Caco-2 (cell line): ENCODE measurements at regions of chr14 and their contacts with region 1.

Region 1: GRCh38 chr14:36070031-36070719 is 106.3 kb downstream of the PTCSC3 start:
- DNase-seq: peak; percentile 77 to 78
- H3K4me3 ChIP-seq: no peak overlapping the region
- H3K4me3 Mint-ChIP-seq: no peak overlapping the region
- H3K27ac Mint-ChIP-seq: no peak overlapping the region
- H3K4me1 ChIP-seq: no peaks in the 10 kb centered on the region
- H3K4me1 Mint-ChIP-seq: no peaks in the 10 kb centered on the region
- H3K27me3 ChIP-seq: peaks cover 2% of the 10 kb centered on the region; the same call in 1 of the 2 replicates
- H3K27me3 Mint-ChIP-seq: peaks cover 4% of the 10 kb centered on the region
- CTCF ChIP-seq: peak; percentile 77 to 90

Region 2: DNA sequence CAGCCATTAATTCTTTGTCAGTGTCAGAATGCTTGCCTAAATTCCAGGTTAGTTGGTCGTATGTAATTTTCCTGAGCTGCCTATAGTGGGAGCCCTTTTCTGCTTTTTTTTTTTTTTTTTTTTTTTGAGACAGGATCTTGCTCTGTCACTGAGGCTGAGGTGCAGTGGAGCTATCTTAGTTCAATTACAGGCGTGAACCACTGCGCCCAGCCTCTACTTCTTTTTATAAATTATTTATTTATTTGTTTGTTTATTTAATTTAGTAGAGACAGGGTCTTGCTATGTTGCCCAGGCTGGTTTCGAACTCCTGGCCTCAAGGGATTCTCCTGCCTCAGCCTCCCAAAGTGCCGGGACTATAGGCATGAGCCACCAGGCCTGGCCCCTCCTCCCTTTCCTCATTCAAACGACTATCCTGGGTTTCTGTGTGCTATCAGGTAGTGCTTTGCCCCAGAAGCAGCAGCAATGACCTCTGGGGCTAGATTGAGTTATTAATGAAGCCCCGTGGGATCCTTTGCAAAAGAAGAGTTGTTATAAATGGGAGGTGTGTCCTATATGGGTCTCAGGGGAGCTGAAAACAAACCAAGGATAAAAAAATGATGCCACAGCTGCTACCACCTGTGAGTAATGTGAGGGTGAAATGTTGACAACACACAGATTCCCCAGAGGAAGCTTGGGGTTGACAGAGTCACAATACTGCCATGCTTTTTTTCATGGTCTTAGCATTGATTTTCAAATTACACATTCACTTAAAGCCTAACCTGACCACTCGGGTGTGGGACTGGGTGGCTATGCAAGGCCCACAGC is 631.1 kb before region 1 on chr14:
- CTCF ChIA-PET with region 1: no interaction called
- POLR2A ChIA-PET with region 1: no interaction called
- intact Hi-C with region 1: no loop called
- DNase-seq: no peak
- H3K4me3 ChIP-seq: no peak overlapping the region
- H3K4me3 Mint-ChIP-seq: no peak overlapping the region
- H3K27ac Mint-ChIP-seq: no peak overlapping the region
- H3K4me1 ChIP-seq: peaks cover 13% of the 10 kb centered on the region
- H3K4me1 Mint-ChIP-seq: no peaks in the 10 kb centered on the region
- H3K27me3 ChIP-seq: no peaks in the 10 kb centered on the region
- H3K27me3 Mint-ChIP-seq: no peaks in the 10 kb centered on the region
- CTCF ChIP-seq: peak; percentile 54 to 66

Region 3: DNA sequence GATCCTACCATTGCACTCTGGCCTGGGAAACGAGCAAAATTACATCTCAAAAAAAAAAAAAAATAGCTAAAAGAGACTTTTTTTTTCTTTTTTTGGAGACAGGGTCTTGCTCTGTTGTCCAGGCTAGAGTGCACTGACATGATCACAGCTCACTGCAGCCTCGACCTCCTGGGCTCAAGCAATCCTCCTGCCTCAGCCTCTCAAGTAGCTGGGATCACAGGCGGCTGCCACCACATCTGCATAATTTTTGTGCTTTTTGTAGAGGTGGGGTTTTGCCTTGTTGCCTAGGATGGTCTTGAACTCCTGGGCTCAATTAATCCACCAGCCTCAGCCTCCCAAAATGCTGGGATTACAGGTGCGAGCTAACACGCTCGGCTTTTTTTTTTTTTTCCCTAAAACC is 272.4 kb before region 1 on chr14:
- CTCF ChIA-PET with region 1: no interaction called
- POLR2A ChIA-PET with region 1: no interaction called
- intact Hi-C with region 1: no loop called
- DNase-seq: no peak
- H3K4me3 ChIP-seq: no peak overlapping the region
- H3K4me3 Mint-ChIP-seq: no peak overlapping the region
- H3K27ac Mint-ChIP-seq: no peak overlapping the region
- H3K4me1 ChIP-seq: no peaks in the 10 kb centered on the region
- H3K4me1 Mint-ChIP-seq: no peaks in the 10 kb centered on the region
- H3K27me3 ChIP-seq: no peaks in the 10 kb centered on the region
- H3K27me3 Mint-ChIP-seq: no peaks in the 10 kb centered on the region
- CTCF ChIP-seq: no peak

Region 4: GRCh38 chr14:35883677-35884293 is 186.4 kb before region 1 on chr14:
- CTCF ChIA-PET with region 1: interaction called, 17 read pairs
- POLR2A ChIA-PET with region 1: no interaction called
- intact Hi-C with region 1: loop called (anchors 1 kb)
- DNase-seq: peak in 1 of 2 experiments; percentile 36
- H3K4me3 ChIP-seq: no peak overlapping the region
- H3K4me3 Mint-ChIP-seq: no peak overlapping the region
- H3K27ac Mint-ChIP-seq: no peak overlapping the region
- H3K4me1 ChIP-seq: no peaks in the 10 kb centered on the region
- H3K4me1 Mint-ChIP-seq: no peaks in the 10 kb centered on the region
- H3K27me3 ChIP-seq: no peaks in the 10 kb centered on the region
- H3K27me3 Mint-ChIP-seq: peaks cover 3% of the 10 kb centered on the region
- CTCF ChIP-seq: peak; percentile 68 to 70

Region 5: GRCh38 chr14:36105401-36105800 is 35.2 kb after region 1 on chr14:
- CTCF ChIA-PET with region 1: interaction called, 9 read pairs
- POLR2A ChIA-PET with region 1: no interaction called
- intact Hi-C with region 1: loop called (anchors 2 kb)
- DNase-seq: peak; percentile 41 to 51
- H3K4me3 ChIP-seq: no peak overlapping the region
- H3K4me3 Mint-ChIP-seq: no peak overlapping the region
- H3K27ac Mint-ChIP-seq: no peak overlapping the region
- H3K4me1 ChIP-seq: no peaks in the 10 kb centered on the region
- H3K4me1 Mint-ChIP-seq: no peaks in the 10 kb centered on the region
- H3K27me3 ChIP-seq: no peaks in the 10 kb centered on the region
- H3K27me3 Mint-ChIP-seq: peaks cover 14% of the 10 kb centered on the region
- CTCF ChIP-seq: peak; percentile 20 to 32

Region 6: GRCh38 chr14:36373982-36374673 is 304.0 kb after region 1 on chr14:
- CTCF ChIA-PET with region 1: interaction called, 44 read pairs
- POLR2A ChIA-PET with region 1: no interaction called
- intact Hi-C with region 1: loop called (anchors 1 kb)
- DNase-seq: peak; percentile 84 to 86
- H3K4me3 ChIP-seq: no peak overlapping the region
- H3K4me3 Mint-ChIP-seq: no peak overlapping the region
- H3K27ac Mint-ChIP-seq: no peak overlapping the region
- H3K4me1 ChIP-seq: no peaks in the 10 kb centered on the region
- H3K4me1 Mint-ChIP-seq: peaks cover 6% of the 10 kb centered on the region
- H3K27me3 ChIP-seq: no peaks in the 10 kb centered on the region
- H3K27me3 Mint-ChIP-seq: peaks cover 3% of the 10 kb centered on the region
- CTCF ChIP-seq: peak; percentile 85 to 90

Region 7: DNA sequence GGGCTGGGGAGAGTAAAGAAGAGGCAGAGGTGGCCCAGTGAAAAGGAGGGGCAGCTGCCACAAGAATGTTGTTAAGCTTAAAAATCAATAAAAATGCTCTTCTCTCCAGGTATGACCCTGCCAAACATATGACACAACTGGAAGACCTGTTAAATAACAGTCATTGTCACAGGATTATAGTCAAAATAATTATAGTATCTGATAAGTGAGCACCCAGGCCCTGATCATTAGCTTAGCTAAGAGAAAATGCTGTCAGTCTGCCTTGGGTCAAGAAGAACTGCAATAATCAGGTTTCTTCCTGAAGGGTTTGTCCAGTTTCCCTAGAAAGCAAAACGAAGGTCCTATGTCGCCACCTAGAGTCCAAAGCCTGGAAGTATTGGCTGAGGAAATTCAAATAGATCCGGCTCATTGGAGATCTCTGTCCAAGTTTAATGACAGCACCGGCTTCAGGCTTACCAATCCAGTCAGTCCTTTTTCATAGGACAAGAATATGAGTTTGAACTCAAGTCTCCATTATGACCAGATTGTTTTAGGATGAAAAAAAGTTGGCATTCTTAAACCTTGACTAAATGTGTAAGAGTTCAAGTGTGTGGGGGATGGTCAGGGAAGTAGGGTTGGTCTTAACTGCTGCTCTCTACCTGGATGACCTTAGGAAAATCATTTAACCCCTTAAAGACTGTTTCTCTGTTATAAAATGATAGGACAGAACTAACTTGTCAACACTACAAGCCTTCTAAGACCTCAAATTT is 534.8 kb after region 1 on chr14:
- CTCF ChIA-PET with region 1: interaction called, 13 read pairs
- POLR2A ChIA-PET with region 1: no interaction called
- intact Hi-C with region 1: loop called (anchors 1 kb)
- DNase-seq: peak; percentile 69 to 80
- H3K4me3 ChIP-seq: no peak overlapping the region
- H3K4me3 Mint-ChIP-seq: no peak overlapping the region
- H3K27ac Mint-ChIP-seq: no peak overlapping the region
- H3K4me1 ChIP-seq: no peaks in the 10 kb centered on the region
- H3K4me1 Mint-ChIP-seq: peaks cover 8% of the 10 kb centered on the region
- H3K27me3 ChIP-seq: no peaks in the 10 kb centered on the region
- H3K27me3 Mint-ChIP-seq: no peaks in the 10 kb centered on the region
- CTCF ChIP-seq: peak; percentile 71 to 84